Sciatic nerve (tissue), 2 donors: ENCODE measurements at regions of chr10 and their contacts with region 1.

Region 1: DNA sequence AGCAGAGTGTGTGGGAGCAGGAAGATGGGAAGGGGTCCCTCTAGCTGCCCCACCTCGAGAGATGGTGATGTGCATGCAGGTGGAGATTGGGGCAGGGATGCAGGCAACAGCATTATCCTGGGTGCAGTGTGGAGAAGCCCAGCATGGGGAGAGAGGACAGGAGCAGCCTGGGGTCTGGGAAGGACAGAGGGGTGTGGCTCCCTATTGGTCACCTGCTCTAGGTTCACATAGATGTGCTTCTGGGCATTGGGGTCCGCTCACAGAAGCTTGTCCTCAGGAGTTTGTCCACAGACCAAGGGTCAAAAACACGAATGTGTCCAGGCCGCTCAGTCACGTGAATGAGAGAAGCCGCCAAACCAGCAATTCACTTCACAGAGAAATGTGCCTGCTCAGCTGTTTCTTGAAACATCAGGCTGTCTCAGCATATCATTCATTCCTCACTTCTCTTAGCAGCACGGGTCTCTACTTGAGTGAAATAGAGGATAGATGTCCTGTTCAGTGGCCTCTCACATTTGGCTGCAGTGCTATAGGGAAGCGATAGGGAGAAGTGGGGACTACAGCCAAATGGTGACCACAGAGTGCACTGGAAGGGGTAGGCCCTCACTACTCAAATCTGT is 11.5 kb upstream of the SLC29A3 start:
- DNase-seq: no peak
- ATAC-seq: peak; percentile 63

Region 2: GRCh38 chr10:71285180-71285545 is 22.4 kb before region 1 on chr10:
- intact Hi-C with region 1: no loop called
- DNase-seq: no peak
- ATAC-seq: peak; percentile 77

Region 3: DNA sequence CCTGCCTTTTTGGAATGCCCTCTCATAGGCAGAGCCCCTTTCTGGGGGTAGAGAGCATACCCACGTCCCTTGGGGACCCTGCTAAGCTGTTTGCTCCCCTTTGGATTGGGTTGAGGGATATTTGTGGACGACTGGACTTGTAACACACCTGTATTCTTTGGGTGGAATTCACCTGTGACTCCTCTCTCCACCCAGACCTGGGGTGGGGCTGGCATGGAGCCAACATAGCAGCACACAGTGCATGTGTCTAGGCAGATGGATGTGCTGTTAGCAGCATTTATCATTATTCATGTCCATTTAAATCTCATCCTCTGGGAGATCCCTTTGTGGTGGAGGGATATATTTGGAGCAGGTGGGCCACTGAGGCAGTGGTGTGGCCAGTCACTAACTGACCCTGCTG is 140.1 kb after region 1 on chr10:
- intact Hi-C with region 1: loop called (anchors 1 kb)
- DNase-seq: no peak
- ATAC-seq: no peak